HEK293 (cell line): ENCODE measurements at regions of chr9 and their contacts with region 1.

Region 1: GRCh38 chr9:91422758-91423711 is 597 bp downstream of the NFIL3 start:
- H3K4me3 ChIP-seq: peak overlapping the region; percentile 76
- H3K27ac ChIP-seq: peak overlapping the region; percentile 26; the same call in 1 of the 2 replicates
- H3K4me1 ChIP-seq: peaks cover 6% of the 10 kb centered on the region; the same call in 1 of the 2 replicates
- CTCF ChIP-seq: peak; percentile 19; the same call in 1 of the 2 replicates

Region 2: GRCh38 chr9:90914868-90915483 is 508.1 kb before region 1 on chr9:
- CTCF ChIA-PET with region 1: interaction called, 94 read pairs
- POLR2A ChIA-PET with region 1: interaction called, 3 read pairs
- H3K4me3 ChIP-seq: no peak overlapping the region
- H3K27ac ChIP-seq: no peak overlapping the region
- H3K4me1 ChIP-seq: no peaks in the 10 kb centered on the region
- CTCF ChIP-seq: peak; percentile 83

Region 3: GRCh38 chr9:90985631-90986030 is 437.4 kb before region 1 on chr9:
- CTCF ChIA-PET with region 1: interaction called, 35 read pairs
- POLR2A ChIA-PET with region 1: interaction called, 6 read pairs
- H3K4me3 ChIP-seq: no peak overlapping the region
- H3K27ac ChIP-seq: no peak overlapping the region
- H3K4me1 ChIP-seq: no peaks in the 10 kb centered on the region
- CTCF ChIP-seq: no peak

Region 4: DNA sequence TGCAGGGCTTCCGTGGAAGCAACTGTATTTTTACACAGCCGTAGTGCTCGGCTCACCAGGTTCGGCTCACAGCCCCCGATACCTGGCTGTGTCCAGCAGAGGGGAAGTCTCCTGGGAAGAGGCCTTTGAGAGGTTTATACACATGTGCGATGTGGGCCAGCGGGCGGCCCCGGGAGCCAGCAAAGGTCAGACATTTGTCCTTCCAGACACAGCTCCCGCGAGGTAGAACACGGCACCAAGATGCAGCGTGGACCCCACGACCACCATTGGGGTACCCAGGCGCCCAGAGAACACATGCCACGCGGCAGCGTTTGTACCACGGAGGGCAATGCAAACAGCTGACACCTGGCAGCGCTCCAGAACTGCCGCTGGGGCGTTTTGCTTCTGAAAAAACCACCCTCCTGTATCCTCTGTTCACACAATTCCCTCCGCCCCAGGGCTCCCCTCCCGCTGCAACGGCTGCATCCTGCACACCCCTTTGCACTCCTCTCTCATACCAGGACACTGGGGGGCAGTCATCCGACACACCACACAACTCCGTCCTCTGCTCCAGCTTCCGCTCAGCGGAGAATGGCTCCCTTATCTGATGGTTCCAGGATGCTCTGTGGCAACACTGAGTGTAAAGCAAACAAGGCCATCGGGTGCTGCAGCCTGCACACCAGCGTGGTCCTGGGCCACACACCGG is 386.1 kb before region 1 on chr9:
- CTCF ChIA-PET with region 1: interaction called, 13 read pairs
- POLR2A ChIA-PET with region 1: interaction called, 3 read pairs
- H3K4me3 ChIP-seq: no peak overlapping the region
- H3K27ac ChIP-seq: no peak overlapping the region
- H3K4me1 ChIP-seq: peaks cover 4% of the 10 kb centered on the region; the same call in 1 of the 2 replicates
- CTCF ChIP-seq: peak; percentile 75

Region 5: GRCh38 chr9:91089405-91090129 is 333.5 kb before region 1 on chr9:
- CTCF ChIA-PET with region 1: interaction called, 12 read pairs
- POLR2A ChIA-PET with region 1: no interaction called
- H3K4me3 ChIP-seq: no peak overlapping the region
- H3K27ac ChIP-seq: no peak overlapping the region
- H3K4me1 ChIP-seq: no peaks in the 10 kb centered on the region
- CTCF ChIP-seq: 0 out of 2 replicates have a peak, but pooled peaks have one; percentile 42

Region 6: GRCh38 chr9:91234510-91234909 is 188.5 kb before region 1 on chr9:
- CTCF ChIA-PET with region 1: interaction called, 11 read pairs
- POLR2A ChIA-PET with region 1: no interaction called
- H3K4me3 ChIP-seq: no peak overlapping the region
- H3K27ac ChIP-seq: no peak overlapping the region
- H3K4me1 ChIP-seq: no peaks in the 10 kb centered on the region
- CTCF ChIP-seq: no peak

Region 7: GRCh38 chr9:91433180-91433579 is 10.1 kb after region 1 on chr9:
- CTCF ChIA-PET with region 1: interaction called, 11 read pairs
- POLR2A ChIA-PET with region 1: no interaction called
- H3K4me3 ChIP-seq: no peak overlapping the region
- H3K27ac ChIP-seq: no peak overlapping the region
- H3K4me1 ChIP-seq: no peaks in the 10 kb centered on the region
- CTCF ChIP-seq: no peak

Region 8: GRCh38 chr9:91522481-91522880 is 99.4 kb after region 1 on chr9:
- CTCF ChIA-PET with region 1: no interaction called
- POLR2A ChIA-PET with region 1: no interaction called
- H3K4me3 ChIP-seq: no peak overlapping the region
- H3K27ac ChIP-seq: no peak overlapping the region
- H3K4me1 ChIP-seq: no peaks in the 10 kb centered on the region
- CTCF ChIP-seq: no peak